IMR-90 (cell line): ENCODE measurements at regions of chr12 and their contacts with region 1.

Region 1: DNA sequence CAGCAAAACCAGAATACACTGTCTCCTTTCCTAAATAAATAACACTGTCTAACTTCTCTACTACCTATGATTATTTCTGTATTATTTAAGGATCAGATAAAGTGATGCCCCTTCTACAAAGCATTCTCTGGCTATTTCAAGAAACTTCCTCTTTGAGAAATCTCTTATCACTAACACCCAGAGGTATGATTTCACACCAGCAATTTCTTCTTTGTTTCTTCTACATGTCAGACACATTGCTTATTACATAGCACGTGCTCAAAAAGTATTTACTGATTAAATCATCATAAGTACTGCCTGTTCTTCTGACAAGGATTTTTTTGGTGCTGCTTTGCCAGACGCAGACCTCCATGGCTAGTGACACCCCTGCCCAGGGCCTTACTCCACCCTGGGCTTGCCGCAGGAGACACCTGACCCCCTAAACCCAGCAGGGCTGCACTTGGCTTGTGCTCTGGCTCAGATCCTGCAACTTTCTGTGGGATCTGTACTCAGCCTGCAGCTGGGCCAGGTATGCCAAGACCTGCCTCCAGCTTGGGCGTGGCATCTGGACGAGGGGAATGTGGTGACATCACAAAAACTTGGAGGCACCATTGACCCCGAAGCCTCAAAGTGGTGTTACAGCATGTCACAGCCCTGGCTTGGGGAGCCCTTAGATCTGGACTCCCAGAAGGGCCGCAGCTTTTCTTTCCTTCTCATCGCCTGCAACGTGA is 15.4 kb upstream of the HIGD1C start:
- DNase-seq: no peak
- ATAC-seq: no peak
- H3K4me3 ChIP-seq: no peak overlapping the region
- H3K27ac ChIP-seq: no peak overlapping the region
- H3K4me1 ChIP-seq: peaks cover 20% of the 10 kb centered on the region
- H3K27me3 ChIP-seq: no peaks in the 10 kb centered on the region
- CTCF ChIP-seq: no peak
- POLR2A ChIP-seq: no peak
- RAD21 ChIP-seq: no peak

Region 2: GRCh38 chr12:50913224-50913623 is 23.8 kb before region 1 on chr12:
- CTCF ChIA-PET with region 1: no interaction called
- POLR2A ChIA-PET with region 1: no interaction called
- dilution Hi-C with region 1: no loop called
- in situ Hi-C with region 1: no loop called
- intact Hi-C with region 1: loop called (anchors 1 kb)
- DNase-seq: no peak
- ATAC-seq: no peak
- H3K4me3 ChIP-seq: no peak overlapping the region
- H3K27ac ChIP-seq: no peak overlapping the region
- H3K4me1 ChIP-seq: peaks cover under 1% of the 10 kb centered on the region; the same call in 1 of the 2 replicates
- H3K27me3 ChIP-seq: no peaks in the 10 kb centered on the region
- CTCF ChIP-seq: no peak
- POLR2A ChIP-seq: no peak
- RAD21 ChIP-seq: no peak

Region 3: GRCh38 chr12:51070004-51070403 is 133.0 kb after region 1 on chr12:
- CTCF ChIA-PET with region 1: no interaction called
- POLR2A ChIA-PET with region 1: no interaction called
- dilution Hi-C with region 1: no loop called
- in situ Hi-C with region 1: no loop called
- intact Hi-C with region 1: no loop called
- DNase-seq: peak; percentile 49
- ATAC-seq: no peak
- H3K4me3 ChIP-seq: no peak overlapping the region
- H3K27ac ChIP-seq: peak overlapping the region; percentile 6; the same call in 1 of the 2 replicates
- H3K4me1 ChIP-seq: peaks cover 5% of the 10 kb centered on the region; the same call in 1 of the 2 replicates
- H3K27me3 ChIP-seq: no peaks in the 10 kb centered on the region
- CTCF ChIP-seq: no peak
- POLR2A ChIP-seq: no peak
- RAD21 ChIP-seq: no peak

Region 4: GRCh38 chr12:51531978-51532497 is 595.1 kb after region 1 on chr12:
- CTCF ChIA-PET with region 1: no interaction called
- POLR2A ChIA-PET with region 1: no interaction called
- dilution Hi-C with region 1: no loop called
- in situ Hi-C with region 1: no loop called
- intact Hi-C with region 1: no loop called
- DNase-seq: peak; percentile 76
- ATAC-seq: peak; percentile 92
- H3K4me3 ChIP-seq: no peak overlapping the region
- H3K27ac ChIP-seq: no peak overlapping the region
- H3K4me1 ChIP-seq: peaks cover 5% of the 10 kb centered on the region; the same call in 1 of the 2 replicates
- H3K27me3 ChIP-seq: no peaks in the 10 kb centered on the region
- CTCF ChIP-seq: peak; percentile 89
- POLR2A ChIP-seq: no peak
- RAD21 ChIP-seq: peak; percentile 90